ENCODE measurements at regions of chr4 and their contacts with region 1.

Region 1: DNA sequence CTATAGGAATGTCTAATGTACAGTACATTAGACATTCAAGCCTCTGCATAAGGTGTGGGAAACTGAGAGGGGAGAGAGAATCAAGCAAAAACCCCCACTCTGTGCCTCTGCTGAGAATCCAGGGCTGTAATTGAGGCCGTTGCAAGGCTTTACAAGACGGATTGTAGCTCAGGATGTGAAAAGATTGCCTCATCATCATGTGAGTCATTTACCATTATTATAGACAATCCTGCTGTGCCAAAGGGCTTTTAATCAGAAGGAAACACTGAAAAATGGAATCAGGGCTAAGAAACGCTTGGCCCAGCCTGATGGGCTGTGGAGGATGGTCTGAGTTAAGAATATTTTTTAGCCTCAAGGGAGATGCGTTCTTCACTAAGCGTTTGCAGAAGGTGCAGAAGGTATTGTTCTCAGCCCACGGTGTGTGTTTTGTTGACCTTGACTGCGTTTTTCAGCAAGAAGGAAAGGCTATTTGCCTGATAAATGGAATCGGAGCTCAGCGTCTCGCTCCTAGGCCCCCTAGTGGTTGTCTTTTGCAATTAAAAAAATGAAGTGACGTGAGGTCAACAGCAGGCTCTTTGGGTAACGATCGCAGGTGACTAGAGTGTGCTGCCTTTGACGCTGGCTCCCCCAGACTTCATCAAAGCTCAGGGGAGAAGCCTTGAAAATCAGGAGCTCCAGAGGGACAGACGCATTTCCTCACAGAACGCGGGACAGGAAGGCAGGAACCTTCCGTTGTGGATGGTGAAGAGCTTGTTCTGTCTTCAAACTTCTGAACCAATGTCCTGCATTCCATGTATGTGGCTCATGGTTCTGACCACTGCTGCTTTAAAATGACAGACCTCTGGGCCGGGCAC is 18.1 kb upstream of the CHRNA9 start:
- DNase-seq: peak; percentile 59
- H3K4me3 Mint-ChIP-seq: peak overlapping the region; percentile 55
- H3K27ac Mint-ChIP-seq: peak overlapping the region; percentile 95
- H3K4me1 Mint-ChIP-seq: peaks cover 17% of the 10 kb centered on the region
- H3K27me3 Mint-ChIP-seq: no peaks in the 10 kb centered on the region
- CTCF ChIP-seq: peak; percentile 48

Region 2: DNA sequence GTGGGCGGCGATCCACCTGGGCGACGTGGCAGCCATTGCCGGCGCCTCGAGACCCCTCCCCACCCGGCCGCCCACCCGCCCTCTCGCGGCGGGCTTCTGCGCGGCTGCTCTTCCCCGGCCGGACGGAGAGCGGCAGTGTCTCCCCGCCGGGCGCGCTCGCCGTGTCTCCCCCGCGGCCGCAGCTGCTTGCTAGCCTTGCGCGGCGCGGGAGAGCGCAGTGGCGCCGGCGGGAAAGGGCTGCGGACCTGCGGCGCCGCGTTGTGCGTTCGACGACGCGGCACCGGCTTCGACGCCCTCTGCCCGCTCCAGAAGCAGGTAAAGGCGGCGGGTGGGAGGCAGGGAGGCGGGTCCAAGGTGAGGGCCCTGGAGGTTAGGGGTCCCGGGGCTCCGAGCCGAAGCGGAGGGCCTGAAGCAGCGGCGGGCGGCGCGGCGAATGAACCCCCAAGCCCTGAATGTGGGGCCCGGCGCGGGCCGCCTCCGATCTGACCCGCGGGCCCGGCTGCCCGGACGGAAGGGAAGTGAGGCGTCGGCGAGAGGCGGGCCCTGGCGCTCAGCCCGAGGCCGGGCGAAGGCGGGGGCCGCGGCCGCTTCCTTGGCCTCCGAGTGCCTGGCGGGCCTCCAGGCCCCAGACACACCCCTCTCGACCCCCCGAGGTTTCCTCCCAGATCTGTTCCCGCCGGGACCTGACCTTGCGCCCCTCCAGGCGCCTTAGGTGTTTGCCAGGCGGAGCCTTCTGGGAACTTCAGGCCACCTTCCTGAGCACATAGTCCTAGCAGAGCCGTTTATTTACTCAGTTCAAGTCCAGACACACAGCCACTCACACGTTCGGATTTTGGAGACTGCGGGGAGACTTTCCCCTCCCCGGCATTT is 260.1 kb before region 1 on chr4 and contains the start of gene N4BP2:
- CTCF ChIA-PET with region 1: interaction called, 4 read pairs
- intact Hi-C with region 1: loop called (anchors 2 kb)
- DNase-seq: peak; percentile 71
- H3K4me3 Mint-ChIP-seq: peak within 1 kb of the TSS; percentile 85
- H3K27ac Mint-ChIP-seq: peak within 1 kb of the TSS; percentile 82
- H3K4me1 Mint-ChIP-seq: no peaks in the 10 kb centered on the region
- H3K27me3 Mint-ChIP-seq: no peaks in the 10 kb centered on the region
- CTCF ChIP-seq: peak; percentile 40
- total RNA-seq, gene N4BP2: 5.0 and 5.3 TPM in 2 replicates

Region 3: DNA sequence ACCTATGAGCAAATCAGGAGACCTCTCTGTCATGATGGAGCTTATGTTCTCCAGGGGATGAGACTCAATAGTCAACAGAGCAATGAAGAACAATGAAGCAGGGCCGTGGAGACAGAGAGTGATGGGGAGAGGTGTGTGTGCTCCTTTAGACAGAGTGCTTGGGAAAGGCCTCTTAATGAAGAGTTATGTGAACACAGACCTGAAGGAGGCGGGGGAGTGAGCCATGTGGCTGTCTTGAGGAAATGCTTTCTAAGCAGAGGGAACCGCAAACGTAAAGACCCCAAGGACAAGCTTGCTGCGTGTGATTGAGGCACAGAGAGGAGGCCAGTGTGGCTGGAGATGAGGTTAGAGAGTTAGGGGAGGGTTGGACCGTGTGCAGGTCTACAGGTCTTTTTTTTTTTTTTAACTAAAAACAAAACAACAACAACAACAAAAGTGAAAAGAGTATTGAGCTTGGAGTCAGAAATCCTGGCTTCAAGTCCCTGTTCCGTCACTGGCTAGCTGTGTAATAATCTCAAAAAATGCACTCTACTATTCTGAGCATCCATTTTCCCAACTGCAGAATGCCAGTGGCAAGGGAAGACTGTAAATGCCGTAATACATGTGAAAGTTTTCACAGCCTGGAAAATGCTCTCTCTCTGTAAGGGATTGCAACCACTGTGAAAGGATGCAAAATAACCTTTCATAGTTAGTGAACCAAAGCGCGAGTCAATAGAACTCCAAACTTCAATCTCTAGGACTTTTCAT is 71.4 kb after region 1 on chr4:
- CTCF ChIA-PET with region 1: no interaction called
- intact Hi-C with region 1: no loop called
- DNase-seq: no peak
- H3K4me3 Mint-ChIP-seq: no peak overlapping the region
- H3K27ac Mint-ChIP-seq: no peak overlapping the region
- H3K4me1 Mint-ChIP-seq: no peaks in the 10 kb centered on the region
- H3K27me3 Mint-ChIP-seq: no peaks in the 10 kb centered on the region
- CTCF ChIP-seq: no peak